ENCODE measurements at regions of chr18 and their contacts with region 1.

Region 1: DNA sequence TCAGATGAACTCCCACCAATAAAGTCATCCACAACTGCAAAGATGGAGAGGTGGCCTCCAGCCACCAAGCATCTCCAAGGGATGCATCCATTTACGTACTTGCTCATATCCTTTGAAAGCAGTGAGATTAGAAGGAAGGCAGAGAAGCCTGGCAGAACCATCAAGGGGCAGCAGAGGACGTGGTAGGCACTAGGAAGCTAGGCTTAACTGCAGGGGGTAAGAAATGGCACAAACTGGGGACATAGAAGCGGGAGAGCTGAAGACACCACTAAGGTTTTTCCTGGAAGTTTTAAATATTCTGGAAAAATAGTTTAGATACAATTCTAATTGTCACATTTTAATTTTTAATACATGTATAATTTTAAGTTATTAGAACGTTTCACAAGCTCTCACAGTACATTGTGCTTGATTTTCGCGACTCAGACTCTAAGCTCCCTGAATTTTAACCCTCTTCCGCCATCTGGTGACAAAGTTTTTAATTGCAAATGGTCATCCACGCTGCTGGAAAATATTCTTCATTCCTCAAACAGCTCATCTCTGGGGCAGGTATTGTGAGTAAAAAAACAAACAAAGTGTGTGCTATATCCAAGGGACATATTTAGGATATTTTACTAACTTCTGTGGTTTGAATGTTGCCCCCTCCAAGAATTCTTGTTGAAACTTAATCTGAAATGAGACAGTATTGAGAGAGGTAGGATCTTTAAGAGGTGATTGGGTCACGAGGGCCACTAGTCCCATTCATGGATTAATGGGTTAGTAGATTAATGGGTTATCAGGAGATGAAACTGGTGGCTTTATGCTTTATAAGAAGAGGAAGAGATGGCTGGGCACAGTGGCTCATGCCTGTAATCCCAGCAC is 1.6 kb upstream of the PSTPIP2 start:
- DNase-seq: peak; percentile 64
- H3K4me3 Mint-ChIP-seq: no peak overlapping the region
- H3K27ac Mint-ChIP-seq: no peak overlapping the region
- H3K4me1 Mint-ChIP-seq: peaks cover 26% of the 10 kb centered on the region
- H3K27me3 Mint-ChIP-seq: peaks cover 12% of the 10 kb centered on the region

Region 2: GRCh38 chr18:45664824-45665763 is 408.6 kb before region 1 on chr18:
- CTCF ChIA-PET with region 1: interaction called, 47 read pairs
- DNase-seq: peak; percentile 76
- H3K4me3 Mint-ChIP-seq: no peak overlapping the region
- H3K27ac Mint-ChIP-seq: peak overlapping the region; percentile 84
- H3K4me1 Mint-ChIP-seq: peaks cover 52% of the 10 kb centered on the region
- H3K27me3 Mint-ChIP-seq: peaks cover 34% of the 10 kb centered on the region

Region 3: DNA sequence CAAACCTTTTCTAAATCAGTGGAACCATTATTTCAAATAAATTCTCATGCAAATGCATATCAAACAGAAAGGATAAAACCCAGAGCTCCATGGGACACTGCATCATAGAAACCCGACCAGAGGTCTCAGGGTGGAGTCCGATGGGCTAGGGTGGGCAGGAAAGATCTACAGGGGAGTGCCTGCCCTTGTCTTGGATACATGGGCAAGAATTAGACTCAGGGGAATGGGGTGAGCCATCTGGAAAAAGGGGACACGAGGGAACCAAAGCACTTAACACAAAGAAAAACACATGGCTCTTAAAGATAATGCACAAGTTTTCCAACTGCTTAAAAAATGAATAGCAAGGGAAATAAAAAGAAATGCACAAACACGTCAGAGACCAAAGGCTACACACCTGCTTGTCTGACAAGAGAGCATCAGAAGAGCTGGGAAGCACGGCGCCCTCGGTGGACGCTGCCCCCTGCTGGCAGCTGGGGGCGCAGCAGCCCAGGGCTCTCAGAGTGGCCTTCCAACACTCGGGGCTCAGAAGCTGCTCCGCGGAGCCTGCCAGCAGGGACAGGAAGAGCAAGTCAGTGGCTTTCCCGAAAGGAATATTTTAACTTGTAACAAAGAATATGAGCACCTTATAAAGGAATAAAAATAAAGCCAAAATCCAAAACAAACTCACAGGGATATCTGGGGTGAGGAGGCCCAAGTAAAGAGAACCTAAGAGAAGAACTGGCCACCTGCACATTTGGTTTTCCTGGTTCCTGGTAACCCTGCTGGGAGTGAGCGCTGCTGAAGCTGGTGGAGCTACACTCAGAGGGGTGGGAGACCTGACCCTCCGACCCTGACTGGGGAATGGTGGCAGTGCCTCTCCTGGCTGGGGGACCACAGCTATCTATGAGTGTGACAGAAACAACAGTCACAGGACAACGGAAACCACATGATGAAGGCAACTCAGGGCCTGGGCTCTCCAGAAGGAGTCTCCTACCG is 193.7 kb before region 1 on chr18:
- CTCF ChIA-PET with region 1: interaction called, 15 read pairs
- DNase-seq: peak; percentile 74
- H3K4me3 Mint-ChIP-seq: no peak overlapping the region
- H3K27ac Mint-ChIP-seq: no peak overlapping the region
- H3K4me1 Mint-ChIP-seq: peaks cover 12% of the 10 kb centered on the region
- H3K27me3 Mint-ChIP-seq: no peaks in the 10 kb centered on the region

Region 4: DNA sequence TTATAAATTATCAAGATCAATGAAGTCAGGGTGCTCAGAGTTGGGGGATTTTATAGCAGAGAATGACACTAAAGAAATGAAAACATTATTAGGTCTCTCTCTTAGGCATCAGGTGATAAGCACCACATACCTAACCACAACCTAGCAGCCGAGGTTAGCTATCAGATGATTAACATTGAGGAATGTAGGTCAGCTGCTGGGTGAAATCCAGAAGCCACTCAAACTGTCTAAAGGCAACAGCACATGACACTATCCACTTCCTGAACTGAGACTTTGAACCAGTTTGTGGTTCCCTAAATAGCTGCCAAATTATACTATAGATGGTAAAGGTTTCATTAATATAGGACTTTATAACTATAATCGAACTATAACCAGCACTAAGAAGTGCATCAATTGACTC is 111.2 kb before region 1 on chr18:
- CTCF ChIA-PET with region 1: interaction called, 14 read pairs
- DNase-seq: peak; percentile 26
- H3K4me3 Mint-ChIP-seq: no peak overlapping the region
- H3K27ac Mint-ChIP-seq: peak overlapping the region; percentile 60
- H3K4me1 Mint-ChIP-seq: peaks cover 54% of the 10 kb centered on the region
- H3K27me3 Mint-ChIP-seq: no peaks in the 10 kb centered on the region

Region 5: GRCh38 chr18:45993389-45993788 is 80.3 kb before region 1 on chr18:
- CTCF ChIA-PET with region 1: interaction called, 10 read pairs
- DNase-seq: no peak
- H3K4me3 Mint-ChIP-seq: no peak overlapping the region
- H3K27ac Mint-ChIP-seq: peak overlapping the region; percentile 22
- H3K4me1 Mint-ChIP-seq: peaks cover 26% of the 10 kb centered on the region
- H3K27me3 Mint-ChIP-seq: no peaks in the 10 kb centered on the region

Region 6: GRCh38 chr18:46095532-46095931 is 21.8 kb after region 1 on chr18:
- CTCF ChIA-PET with region 1: interaction called, 10 read pairs
- DNase-seq: no peak
- H3K4me3 Mint-ChIP-seq: no peak overlapping the region
- H3K27ac Mint-ChIP-seq: no peak overlapping the region
- H3K4me1 Mint-ChIP-seq: peaks cover 44% of the 10 kb centered on the region
- H3K27me3 Mint-ChIP-seq: no peaks in the 10 kb centered on the region

Region 7: GRCh38 chr18:46182633-46183358 is 109.1 kb after region 1 on chr18:
- CTCF ChIA-PET with region 1: no interaction called
- DNase-seq: no peak
- H3K4me3 Mint-ChIP-seq: no peak overlapping the region
- H3K27ac Mint-ChIP-seq: peak overlapping the region; percentile 29
- H3K4me1 Mint-ChIP-seq: peaks cover 62% of the 10 kb centered on the region
- H3K27me3 Mint-ChIP-seq: no peaks in the 10 kb centered on the region